CD8-positive, alpha-beta T cell (primary cell): ENCODE measurements at regions of chr13 and their contacts with region 1.

Region 1: GRCh38 chr13:114099191-114099590 is 33.2 kb downstream of the RASA3 start:
- DNase-seq: peak in 1 of 9 experiments; percentile 11
- ATAC-seq: no peak
- H3K4me3 ChIP-seq: no peak overlapping the region
- H3K4me3 Mint-ChIP-seq: no peak overlapping the region
- H3K27ac ChIP-seq: peak overlapping the region in 1 of 2 experiments; percentile 19
- H3K27ac Mint-ChIP-seq: no peak overlapping the region
- H3K4me1 ChIP-seq: peaks cover 81% of the 10 kb centered on the region
- H3K4me1 Mint-ChIP-seq: peaks cover 75% of the 10 kb centered on the region
- H3K27me3 ChIP-seq: no peaks in the 10 kb centered on the region
- H3K27me3 Mint-ChIP-seq: no peaks in the 10 kb centered on the region
- CTCF ChIP-seq: no peak

Region 2: DNA sequence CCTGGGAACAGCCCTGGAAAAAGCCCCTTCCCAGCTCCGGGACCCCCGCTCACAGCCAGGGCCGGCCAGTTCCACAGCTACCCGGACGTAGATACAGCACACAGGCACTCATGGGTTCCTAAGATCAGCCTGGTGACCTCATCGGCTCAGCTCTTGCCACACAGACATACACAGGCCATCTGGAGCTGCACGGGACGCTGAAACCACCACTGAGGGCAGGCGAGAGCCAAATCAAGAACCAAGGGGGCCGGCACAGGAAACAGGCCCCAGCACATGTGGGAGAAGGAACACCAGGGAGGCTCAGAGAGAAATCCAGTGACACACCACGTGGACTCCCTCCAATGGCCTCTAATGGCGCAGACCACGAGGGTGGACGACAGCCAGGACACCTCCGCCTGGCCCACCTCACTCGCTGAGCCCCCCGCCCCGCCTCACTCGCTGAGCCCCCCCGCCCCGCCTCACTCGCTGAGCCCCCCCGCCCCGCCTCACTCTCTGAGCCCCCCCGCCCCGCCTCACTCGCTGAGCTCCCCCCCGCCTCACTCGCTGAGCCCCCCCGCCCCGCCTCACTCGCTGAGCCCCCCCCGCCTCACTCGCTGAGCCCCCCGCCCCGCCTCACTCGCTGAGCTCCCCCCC is 55.7 kb before region 1 on chr13:
- CTCF ChIA-PET with region 1: no interaction called
- POLR2A ChIA-PET with region 1: no interaction called
- intact Hi-C with region 1: loop called in 1 of 2 experiments (anchors 10 kb)
- DNase-seq: peak in 3 of 9 experiments; percentile 28 to 53 (median 43)
- ATAC-seq: peak; percentile 44
- H3K4me3 ChIP-seq: no peak overlapping the region
- H3K4me3 Mint-ChIP-seq: no peak overlapping the region
- H3K27ac ChIP-seq: no peak overlapping the region
- H3K27ac Mint-ChIP-seq: peak overlapping the region; percentile 80
- H3K4me1 ChIP-seq: peaks cover 45% of the 10 kb centered on the region
- H3K4me1 Mint-ChIP-seq: peaks cover 53% of the 10 kb centered on the region
- H3K27me3 ChIP-seq: no peaks in the 10 kb centered on the region
- H3K27me3 Mint-ChIP-seq: no peaks in the 10 kb centered on the region
- CTCF ChIP-seq: no peak

Region 3: GRCh38 chr13:114078461-114079451 is 20.4 kb before region 1 on chr13:
- CTCF ChIA-PET with region 1: no interaction called
- POLR2A ChIA-PET with region 1: no interaction called
- intact Hi-C with region 1: loop called in 1 of 2 experiments (anchors 2 kb)
- DNase-seq: peak in 3 of 9 experiments; percentile 42 to 56 (median 48)
- ATAC-seq: peak; percentile 74
- H3K4me3 ChIP-seq: no peak overlapping the region
- H3K4me3 Mint-ChIP-seq: peak overlapping the region; percentile 42
- H3K27ac ChIP-seq: peak overlapping the region; percentile 2 to 49
- H3K27ac Mint-ChIP-seq: peak overlapping the region; percentile 92
- H3K4me1 ChIP-seq: peaks cover 61% of the 10 kb centered on the region
- H3K4me1 Mint-ChIP-seq: peaks cover 65% of the 10 kb centered on the region
- H3K27me3 ChIP-seq: no peaks in the 10 kb centered on the region
- H3K27me3 Mint-ChIP-seq: no peaks in the 10 kb centered on the region
- CTCF ChIP-seq: no peak